ENCODE measurements at regions of chr10 and their contacts with region 1.

Region 1: GRCh38 chr10:102641880-102642735 is 2.2 kb upstream of the TRIM8 start:
- DNase-seq: peak; percentile 99
- ATAC-seq: peak; percentile 73 to 83 (median 78)
- H3K4me3 ChIP-seq: peak overlapping the region; percentile 94
- H3K27ac ChIP-seq: peak overlapping the region; percentile 99
- H3K4me1 ChIP-seq: peaks cover 15% of the 10 kb centered on the region
- H3K27me3 ChIP-seq: no peaks in the 10 kb centered on the region
- CTCF ChIP-seq: no peak

Region 2: GRCh38 chr10:101818119-101818871 is 823.8 kb before region 1 on chr10 and contains the start of gene OGA:
- intact Hi-C with region 1: loop called in 1 of 2 experiments (anchors 5 kb)
- DNase-seq: peak; percentile 98 to 99
- ATAC-seq: peak; percentile 90 to 97 (median 94)
- H3K4me3 ChIP-seq: peak within 1 kb of the TSS; percentile 93
- H3K27ac ChIP-seq: peak within 1 kb of the TSS; percentile 93
- H3K4me1 ChIP-seq: peaks cover 32% of the 10 kb centered on the region
- H3K27me3 ChIP-seq: no peaks in the 10 kb centered on the region
- CTCF ChIP-seq: no peak
- total RNA-seq, gene OGA: 52.6 to 59.8 (median 57.3) TPM

Region 3: DNA sequence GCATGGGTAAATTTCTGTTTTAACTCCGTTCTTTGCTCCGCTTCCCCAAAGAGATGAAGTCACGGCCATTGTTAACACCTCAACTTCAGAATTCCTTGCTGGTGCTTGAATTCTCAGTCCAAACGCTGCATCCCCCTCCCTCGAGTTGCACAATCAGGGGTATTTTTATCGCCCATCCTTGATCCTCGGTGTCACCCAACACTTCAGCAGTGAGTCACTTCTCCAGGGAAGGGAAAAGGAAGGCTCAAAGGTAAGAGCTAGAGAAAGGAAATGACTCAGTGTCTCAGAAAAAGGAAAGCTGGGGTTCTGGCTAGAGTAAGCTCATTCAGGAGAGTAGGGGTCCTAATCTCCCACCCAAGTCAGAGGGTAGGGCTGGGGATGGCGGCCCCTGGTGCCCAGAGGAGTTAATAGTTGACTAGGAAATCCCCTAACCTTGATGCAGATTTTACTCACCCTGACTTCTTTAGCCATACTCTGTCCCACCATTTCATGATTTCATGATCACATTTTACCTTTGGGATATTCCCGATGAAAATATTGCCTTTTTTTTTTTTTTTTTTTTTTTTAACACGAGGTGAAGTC is 37.6 kb before region 1 on chr10:
- intact Hi-C with region 1: loop called in 1 of 2 experiments (anchors 5 kb)
- DNase-seq: no peak
- ATAC-seq: peak; percentile 81 to 86 (median 82)
- H3K4me3 ChIP-seq: no peak overlapping the region
- H3K27ac ChIP-seq: peak overlapping the region; percentile 89
- H3K4me1 ChIP-seq: peaks cover 67% of the 10 kb centered on the region
- H3K27me3 ChIP-seq: no peaks in the 10 kb centered on the region
- CTCF ChIP-seq: no peak

Region 4: GRCh38 chr10:102776779-102777456 is 134.8 kb after region 1 on chr10:
- intact Hi-C with region 1: loop called in 1 of 2 experiments (anchors 10 kb)
- DNase-seq: peak; percentile 85 to 92
- ATAC-seq: peak; percentile 71 to 81 (median 74)
- H3K4me3 ChIP-seq: peak overlapping the region; percentile 81
- H3K27ac ChIP-seq: peak overlapping the region; percentile 98
- H3K4me1 ChIP-seq: peaks cover 77% of the 10 kb centered on the region
- H3K27me3 ChIP-seq: no peaks in the 10 kb centered on the region
- CTCF ChIP-seq: no peak

Region 5: GRCh38 chr10:102831322-102832071 is 189.4 kb after region 1 on chr10:
- intact Hi-C with region 1: no loop called
- DNase-seq: no peak
- ATAC-seq: no peak
- H3K4me3 ChIP-seq: no peak overlapping the region
- H3K27ac ChIP-seq: no peak overlapping the region
- H3K4me1 ChIP-seq: no peaks in the 10 kb centered on the region
- H3K27me3 ChIP-seq: no peaks in the 10 kb centered on the region
- CTCF ChIP-seq: no peak

Region 6: GRCh38 chr10:103102195-103102594 is 460.1 kb after region 1 on chr10:
- intact Hi-C with region 1: no loop called
- DNase-seq: no peak
- ATAC-seq: peak; percentile 47 to 82 (median 74)
- H3K4me3 ChIP-seq: no peak overlapping the region
- H3K27ac ChIP-seq: peak overlapping the region; percentile 47
- H3K4me1 ChIP-seq: peaks cover 35% of the 10 kb centered on the region
- H3K27me3 ChIP-seq: no peaks in the 10 kb centered on the region
- CTCF ChIP-seq: no peak

Measured in psoas muscle (tissue), 8 donors.